Heart left ventricle (tissue), 16 donors: ENCODE measurements at regions of chr4 and their contacts with region 1.

Region 1: DNA sequence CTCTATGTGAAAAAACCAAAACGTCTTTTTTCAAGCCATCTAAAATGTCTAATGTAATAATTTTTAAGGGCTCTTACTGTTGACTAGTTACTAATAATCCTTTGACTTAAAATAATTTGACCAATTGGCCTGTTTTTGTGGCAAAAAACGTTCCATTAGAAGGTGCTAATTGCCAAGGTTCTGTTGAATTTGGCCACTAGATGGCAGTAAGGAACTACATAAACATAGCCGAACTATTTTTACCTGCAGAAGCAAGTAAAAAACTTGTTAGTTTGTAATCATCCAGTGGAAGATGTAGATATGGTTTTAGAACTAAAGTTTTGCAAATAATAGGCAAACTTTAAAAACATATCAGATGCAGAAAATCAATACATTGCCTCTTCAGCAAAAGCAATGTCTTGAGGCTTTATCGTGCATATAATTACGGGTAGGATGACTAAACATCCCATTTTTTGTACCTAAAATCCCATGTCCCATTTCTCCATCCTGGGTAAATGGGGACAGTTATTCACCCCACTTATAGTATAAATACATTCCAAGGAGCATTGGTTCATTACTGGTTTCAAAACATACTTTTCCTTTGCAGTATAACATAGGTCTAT is 57.6 kb downstream of the PROM1 start:
- DNase-seq: no peak
- ATAC-seq: peak in 1 of 4 donors; percentile 38
- H3K4me3 ChIP-seq: no peak overlapping the region
- H3K27ac ChIP-seq: peak overlapping the region in 1 of 12 donors; percentile 9
- H3K4me1 ChIP-seq: peaks cover 0 to 34% (median 7%) of the 10 kb centered on the region in 12 donors
- H3K27me3 ChIP-seq: no peaks in the 10 kb centered on the region
- CTCF ChIP-seq: peak; percentile 76 to 94 (median 85)
- POLR2A ChIP-seq: no peak

Region 2: GRCh38 chr4:15729910-15730533 is 296.2 kb before region 1 on chr4:
- intact Hi-C with region 1: no loop called
- DNase-seq: peak in 1 of 5 donors; percentile 13
- ATAC-seq: peak in 3 of 4 donors; percentile 36 to 53 (median 51)
- H3K4me3 ChIP-seq: no peak overlapping the region
- H3K27ac ChIP-seq: no peak overlapping the region
- H3K4me1 ChIP-seq: peaks cover 0 to 4% (median 0%) of the 10 kb centered on the region in 12 donors
- H3K27me3 ChIP-seq: no peaks in the 10 kb centered on the region
- CTCF ChIP-seq: peak; percentile 79 to 93 (median 87)
- POLR2A ChIP-seq: no peak

Region 3: DNA sequence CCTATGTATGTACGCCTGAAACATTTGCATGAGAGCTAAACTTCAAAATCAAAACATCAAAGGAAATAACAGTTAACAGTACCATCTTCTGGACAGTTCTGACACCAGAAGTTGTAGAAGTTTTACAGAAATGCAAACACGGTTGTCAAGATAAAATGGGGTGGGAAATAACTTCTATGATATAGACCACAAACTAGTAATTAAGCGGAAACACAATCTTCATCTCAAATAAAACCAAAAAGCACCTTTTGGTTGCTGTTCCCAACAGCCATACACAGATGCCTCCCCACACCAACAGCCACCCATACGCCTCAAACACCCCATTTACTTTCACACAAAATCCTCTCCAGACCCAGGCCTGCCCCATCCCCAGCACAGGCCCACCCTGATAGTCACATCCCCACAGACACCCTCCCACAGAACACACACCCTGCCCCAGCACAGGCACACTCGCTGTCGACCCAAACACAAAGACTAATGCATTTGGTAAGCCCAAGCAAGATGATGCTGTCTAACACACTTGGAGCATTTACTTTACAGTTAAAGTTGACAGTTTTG is 135.7 kb after region 1 on chr4:
- intact Hi-C with region 1: loop called in 2 of 10 experiments (anchors 10 kb)
- DNase-seq: no peak
- ATAC-seq: no peak
- H3K4me3 ChIP-seq: no peak overlapping the region
- H3K27ac ChIP-seq: no peak overlapping the region
- H3K4me1 ChIP-seq: peaks cover 0 to 24% (median 6%) of the 10 kb centered on the region in 12 donors
- H3K27me3 ChIP-seq: no peaks in the 10 kb centered on the region
- CTCF ChIP-seq: no peak
- POLR2A ChIP-seq: no peak

Region 4: DNA sequence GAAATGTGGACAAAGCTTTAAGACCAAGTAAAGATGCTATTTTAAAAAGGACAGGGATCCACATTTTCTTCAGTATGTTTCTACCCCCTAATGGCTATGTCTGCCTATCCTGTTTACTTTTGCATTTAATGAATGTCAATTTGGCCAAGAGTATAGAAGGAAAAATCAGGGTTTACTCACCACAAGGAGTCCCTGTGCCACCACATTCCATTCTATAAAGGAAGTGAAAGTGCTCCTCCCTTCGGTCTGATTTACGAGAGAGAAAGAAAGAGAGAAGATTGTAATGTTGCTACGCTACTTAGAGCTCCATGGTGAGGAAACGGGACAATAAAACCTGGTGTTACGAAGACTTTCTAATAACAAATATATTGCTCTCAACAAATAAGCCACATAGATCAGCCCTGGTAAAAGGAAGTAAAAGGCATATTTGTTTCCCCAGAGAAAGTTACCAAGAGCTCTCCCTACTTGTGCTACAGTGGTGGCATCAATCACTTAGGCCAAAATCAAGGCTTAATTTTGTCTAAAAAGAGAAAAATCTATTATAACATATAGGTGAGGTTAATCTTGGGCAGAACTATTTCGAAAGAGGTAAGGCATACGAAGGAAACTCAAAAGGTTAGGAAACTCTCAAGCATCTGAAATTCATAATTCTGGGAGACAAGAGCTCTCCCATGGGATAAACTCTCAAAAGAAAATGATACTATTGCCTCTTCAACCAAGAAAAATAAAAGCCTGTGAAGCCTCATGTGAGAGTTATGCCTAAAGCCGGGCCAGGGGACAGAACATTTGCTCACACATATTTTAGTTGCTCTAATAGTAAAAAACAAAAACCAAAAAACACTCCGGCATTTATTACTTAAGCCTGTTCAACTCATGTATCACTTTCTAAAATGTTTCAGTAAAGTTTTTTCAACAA is 170.5 kb after region 1 on chr4:
- intact Hi-C with region 1: loop called (anchors 1 to 5 kb)
- DNase-seq: no peak
- ATAC-seq: peak; percentile 78 to 91 (median 88)
- H3K4me3 ChIP-seq: peak overlapping the region in 10 of 12 donors; percentile 11 to 49 (median 28)
- H3K27ac ChIP-seq: peak overlapping the region in 11 of 12 donors; percentile 12 to 66 (median 42)
- H3K4me1 ChIP-seq: peaks cover 0 to 57% (median 37%) of the 10 kb centered on the region in 12 donors
- H3K27me3 ChIP-seq: no peaks in the 10 kb centered on the region
- CTCF ChIP-seq: peak in 10 of 12 donors; percentile 0 to 66 (median 48)
- POLR2A ChIP-seq: no peak

Region 5: DNA sequence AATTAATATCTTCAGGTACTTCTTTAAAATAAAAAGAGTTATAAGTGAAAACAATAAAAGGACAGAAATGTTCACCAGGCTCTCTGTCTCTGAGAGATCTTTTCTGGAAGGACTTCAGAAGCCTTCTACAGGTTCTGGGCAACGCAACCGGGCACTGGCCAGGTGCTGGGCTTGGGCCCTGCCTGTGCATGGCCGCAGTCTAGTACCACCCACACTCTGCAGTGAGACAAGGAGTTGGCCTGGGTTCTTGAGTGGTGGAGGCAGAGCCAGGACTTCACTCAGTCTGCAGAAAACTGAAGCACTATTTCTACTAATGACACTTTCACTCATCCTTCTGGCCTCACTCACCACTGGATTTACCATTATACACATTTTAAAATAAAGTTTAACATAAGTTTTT is 178.2 kb after region 1 on chr4:
- intact Hi-C with region 1: loop called in 8 of 10 experiments (anchors 2 to 5 kb)
- DNase-seq: no peak
- ATAC-seq: peak in 3 of 4 donors; percentile 48 to 60 (median 50)
- H3K4me3 ChIP-seq: no peak overlapping the region
- H3K27ac ChIP-seq: peak overlapping the region in 1 of 12 donors; percentile 21
- H3K4me1 ChIP-seq: peaks cover 0 to 47% (median 6%) of the 10 kb centered on the region in 12 donors
- H3K27me3 ChIP-seq: no peaks in the 10 kb centered on the region
- CTCF ChIP-seq: no peak
- POLR2A ChIP-seq: no peak

Region 6: DNA sequence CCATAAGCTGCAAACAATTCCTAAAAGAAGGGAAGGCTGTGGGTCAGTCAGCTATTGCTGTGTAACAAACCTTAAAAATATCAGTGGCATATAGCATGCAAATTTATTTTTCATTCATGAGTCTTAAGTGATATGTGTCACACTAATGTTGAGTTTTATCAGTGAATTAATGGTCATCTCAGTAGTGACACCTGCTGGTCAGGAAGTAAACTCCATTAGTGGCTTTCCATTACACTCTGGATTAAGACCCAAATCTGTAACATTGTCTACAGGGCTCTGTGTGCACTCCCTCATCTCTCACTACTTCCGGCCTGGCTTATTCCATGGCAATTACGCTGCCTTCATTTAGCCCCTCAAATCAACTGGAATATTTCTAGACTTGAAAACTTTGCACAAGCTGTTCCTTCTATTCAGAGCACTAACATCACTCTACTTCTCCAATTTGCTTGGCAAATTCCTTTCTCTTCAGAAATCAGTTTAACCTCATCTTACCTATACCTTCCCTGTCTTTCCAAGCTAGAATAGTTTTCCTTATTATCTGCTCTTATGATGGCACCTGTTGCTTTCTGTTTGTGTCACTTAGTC is 417.3 kb after region 1 on chr4:
- intact Hi-C with region 1: loop called in 2 of 10 experiments (anchors 5 to 10 kb)
- DNase-seq: no peak
- ATAC-seq: no peak
- H3K4me3 ChIP-seq: no peak overlapping the region
- H3K27ac ChIP-seq: no peak overlapping the region
- H3K4me1 ChIP-seq: peaks cover 0 to 10% (median 0%) of the 10 kb centered on the region in 12 donors
- H3K27me3 ChIP-seq: no peaks in the 10 kb centered on the region
- CTCF ChIP-seq: peak; percentile 43 to 78 (median 64)
- POLR2A ChIP-seq: no peak

Region 7: GRCh38 chr4:17468371-17469221 is 1442.3 kb after region 1 on chr4:
- intact Hi-C with region 1: loop called in 1 of 10 experiments (anchors 10 kb)
- DNase-seq: peak in 1 of 5 donors; percentile 27
- ATAC-seq: no peak
- H3K4me3 ChIP-seq: no peak overlapping the region
- H3K27ac ChIP-seq: no peak overlapping the region
- H3K4me1 ChIP-seq: peaks cover 0 to 6% (median 0%) of the 10 kb centered on the region in 12 donors
- H3K27me3 ChIP-seq: no peaks in the 10 kb centered on the region
- CTCF ChIP-seq: peak; percentile 33 to 70 (median 54)
- POLR2A ChIP-seq: no peak